OCI-LY7 (cell line): ENCODE measurements at regions of chr13 and their contacts with region 1.

Region 1: DNA sequence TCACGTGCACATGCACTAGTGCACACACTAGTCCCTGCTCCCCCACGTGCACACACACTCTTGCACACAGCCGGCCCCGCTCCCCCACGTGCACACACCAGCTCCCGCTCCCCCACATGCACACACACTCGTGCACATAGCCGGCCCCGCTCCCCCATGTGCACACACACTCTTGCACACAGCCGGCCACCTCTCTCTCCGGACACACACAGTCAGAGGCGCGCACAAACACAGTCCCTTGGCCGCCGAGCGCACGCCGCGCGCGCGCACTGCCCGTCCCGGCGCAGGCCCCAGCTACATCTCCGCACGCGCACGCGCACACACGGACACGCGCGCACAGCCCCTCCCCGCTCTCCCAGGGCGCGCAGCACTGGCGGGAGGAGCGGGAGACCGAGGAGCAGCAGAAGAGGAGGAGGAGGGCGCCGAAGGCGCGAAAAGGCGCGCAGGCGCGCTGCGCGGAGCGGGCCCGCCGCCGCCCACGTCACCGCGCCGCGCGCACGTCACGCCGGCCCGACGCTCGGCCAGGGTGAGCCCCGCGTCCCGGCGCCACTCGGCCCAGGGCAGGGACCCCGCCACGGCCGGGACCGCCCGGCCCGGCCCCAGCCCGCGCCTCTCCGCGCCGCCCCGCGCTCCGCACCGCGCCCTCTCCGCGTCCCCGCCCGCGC is at the start of gene TFDP1:
- DNase-seq: peak; percentile 82
- H3K4me3 ChIP-seq: peak within 1 kb of the TSS; percentile 90
- H3K27ac ChIP-seq: peak within 1 kb of the TSS; percentile 45
- H3K4me1 ChIP-seq: peaks cover 14% of the 10 kb centered on the region
- CTCF ChIP-seq: no peak
- total RNA-seq, gene TFDP1: 81.2 and 87.9 TPM in 2 replicates

Region 2: DNA sequence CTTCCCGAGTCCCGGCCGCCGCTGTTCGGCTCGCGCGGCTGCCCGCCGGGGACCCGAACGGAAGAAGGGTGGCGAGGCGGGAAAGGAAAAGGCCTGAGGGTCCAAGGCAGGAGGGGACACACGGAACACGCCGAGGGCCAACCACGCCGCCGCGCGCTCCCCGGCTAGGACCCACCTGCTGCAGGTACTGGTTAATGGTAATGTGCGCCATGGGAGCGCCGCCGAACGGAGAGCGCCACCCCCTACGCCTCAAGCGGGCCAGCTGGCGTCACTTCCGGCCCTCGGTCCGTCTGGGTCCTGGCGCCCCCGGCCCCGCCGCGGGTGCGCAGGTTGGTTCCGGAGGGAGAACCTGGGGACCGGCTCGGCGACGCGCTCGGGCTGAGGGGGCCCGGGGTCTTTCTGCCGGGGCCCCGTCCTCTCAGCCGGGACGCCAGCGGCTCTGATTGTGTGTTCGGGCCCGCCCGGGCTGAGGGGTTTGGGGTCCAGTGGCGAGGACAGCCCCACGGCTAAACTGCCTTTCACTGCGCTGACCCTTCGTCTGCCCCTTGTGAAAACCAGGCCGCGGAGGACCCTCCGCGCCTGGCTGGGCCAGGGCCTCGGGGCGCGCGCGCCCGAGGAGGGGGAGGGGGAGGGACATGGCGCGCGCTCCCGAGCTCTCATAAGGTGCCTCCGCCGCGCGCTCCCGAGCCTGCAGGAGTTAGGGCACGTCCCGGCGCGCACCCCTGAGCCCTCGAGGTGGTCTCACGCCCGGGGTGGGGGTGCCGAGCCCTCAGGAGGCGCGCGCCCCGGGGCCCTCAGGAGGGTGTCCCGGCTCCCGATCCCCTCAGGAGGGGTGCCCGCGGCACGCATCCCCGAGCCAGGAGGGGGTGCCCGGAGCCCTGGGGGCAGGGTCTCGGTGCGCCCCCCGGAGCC is 375.7 kb before region 1 on chr13 and contains the start of gene PCID2:
- CTCF ChIA-PET with region 1: no interaction called
- POLR2A ChIA-PET with region 1: no interaction called
- intact Hi-C with region 1: loop called (anchors 10 kb)
- DNase-seq: peak; percentile 88
- H3K4me3 ChIP-seq: peak within 1 kb of the TSS; percentile 94
- H3K27ac ChIP-seq: peak within 1 kb of the TSS; percentile 84
- H3K4me1 ChIP-seq: peaks cover 22% of the 10 kb centered on the region
- CTCF ChIP-seq: no peak
- total RNA-seq, gene PCID2: 38.3 and 41.9 TPM in 2 replicates

Region 3: DNA sequence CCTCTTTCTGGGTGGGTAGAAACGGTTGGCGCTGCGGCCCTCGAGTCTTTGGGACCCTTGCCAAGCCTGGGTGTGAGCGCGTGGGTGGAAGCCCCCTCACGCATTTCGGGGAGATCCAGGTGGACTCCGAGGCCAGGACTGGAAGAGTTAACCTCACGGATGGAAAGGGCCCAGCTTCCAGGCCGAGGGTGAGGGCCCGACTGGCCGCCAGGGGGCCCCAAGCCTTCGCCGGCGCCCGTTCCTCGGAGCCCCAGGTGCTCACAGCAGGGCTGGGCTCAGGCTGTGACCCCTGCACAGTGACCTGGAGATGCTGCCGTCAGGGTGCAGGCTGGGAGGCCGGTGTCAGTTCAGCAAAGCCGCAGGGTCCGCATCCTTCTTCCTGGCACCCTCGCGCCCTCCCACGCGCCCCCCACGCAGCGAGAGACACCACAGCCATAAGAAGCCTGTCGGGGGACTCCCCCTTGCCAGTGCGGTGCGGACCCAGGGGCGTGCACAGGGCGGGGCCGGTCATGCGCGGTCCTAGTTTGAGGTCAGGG is 140.5 kb after region 1 on chr13:
- CTCF ChIA-PET with region 1: no interaction called
- POLR2A ChIA-PET with region 1: no interaction called
- intact Hi-C with region 1: no loop called
- DNase-seq: peak; percentile 2
- H3K4me3 ChIP-seq: no peak overlapping the region
- H3K27ac ChIP-seq: no peak overlapping the region
- H3K4me1 ChIP-seq: no peaks in the 10 kb centered on the region
- CTCF ChIP-seq: peak; percentile 49